Calu3 (cell line): ENCODE measurements at regions of chr17 and their contacts with region 1.

Region 1: DNA sequence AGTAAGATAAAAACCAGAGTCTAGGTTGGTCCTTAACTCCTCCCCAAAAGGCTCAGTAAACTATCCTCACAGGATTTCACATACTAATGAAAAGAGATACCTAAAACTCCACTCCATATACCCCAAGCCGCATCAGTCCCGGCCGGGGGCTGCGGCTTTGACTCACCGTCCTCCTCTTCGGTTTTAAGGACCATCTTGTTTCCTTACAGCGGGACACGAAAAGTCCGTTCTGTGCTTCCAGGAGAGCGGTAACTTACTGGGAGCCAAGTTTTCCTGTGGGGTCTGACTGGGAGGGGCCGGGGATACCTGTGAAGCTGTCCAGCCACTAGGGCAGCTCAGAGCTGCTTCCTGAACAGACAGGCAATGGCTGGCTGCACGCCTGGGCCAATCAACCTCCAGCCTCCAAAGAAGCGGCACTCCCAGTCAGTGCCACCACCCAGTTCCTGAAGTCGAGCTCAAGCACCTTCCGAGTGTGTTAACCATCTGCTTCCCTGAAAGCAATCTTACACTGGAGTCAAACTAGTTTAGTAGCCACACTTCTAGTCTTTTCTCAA is 45.5 kb downstream of the CYTH1 start:
- DNase-seq: peak; percentile 88
- H3K4me3 Mint-ChIP-seq: peak overlapping the region; percentile 96
- H3K27ac Mint-ChIP-seq: peak overlapping the region; percentile 88
- H3K4me1 Mint-ChIP-seq: peaks cover 38% of the 10 kb centered on the region
- H3K27me3 Mint-ChIP-seq: no peaks in the 10 kb centered on the region
- CTCF ChIP-seq: peak; percentile 31

Region 2: GRCh38 chr17:78278139-78279127 is 458.2 kb before region 1 on chr17:
- CTCF ChIA-PET with region 1: no interaction called
- intact Hi-C with region 1: no loop called
- DNase-seq: no peak
- H3K4me3 Mint-ChIP-seq: no peak overlapping the region
- H3K27ac Mint-ChIP-seq: no peak overlapping the region
- H3K4me1 Mint-ChIP-seq: no peaks in the 10 kb centered on the region
- H3K27me3 Mint-ChIP-seq: no peaks in the 10 kb centered on the region
- CTCF ChIP-seq: no peak

Region 3: DNA sequence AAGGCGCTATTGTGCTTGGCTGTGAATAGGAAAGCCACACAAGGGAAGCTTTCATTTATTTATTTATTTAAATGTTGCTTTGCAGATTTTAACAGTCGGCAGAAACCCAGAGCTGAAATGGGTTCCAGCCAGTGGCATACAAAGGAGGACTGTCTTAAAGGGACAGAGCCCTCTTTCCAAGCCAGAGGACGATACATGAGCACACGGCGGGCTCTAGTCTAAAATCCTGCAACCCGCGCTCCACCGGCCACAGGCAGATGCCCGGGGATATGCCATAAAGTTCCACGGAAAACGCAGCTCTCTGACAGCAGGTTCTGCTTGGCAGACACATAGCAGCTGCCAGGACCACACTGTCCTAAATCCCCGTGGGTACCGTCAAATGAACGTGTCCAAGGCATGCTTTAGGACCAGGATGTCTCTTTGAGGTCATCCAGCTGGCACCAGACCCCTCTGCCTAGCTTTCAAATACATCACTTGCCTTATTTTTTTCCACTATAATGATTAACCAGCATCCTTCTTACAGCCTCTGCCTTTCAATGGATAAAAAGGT is 19.1 kb before region 1 on chr17:
- CTCF ChIA-PET with region 1: interaction called, 12 read pairs
- intact Hi-C with region 1: no loop called
- DNase-seq: peak; percentile 16
- H3K4me3 Mint-ChIP-seq: peak overlapping the region; percentile 72
- H3K27ac Mint-ChIP-seq: peak overlapping the region; percentile 37
- H3K4me1 Mint-ChIP-seq: peaks cover 50% of the 10 kb centered on the region
- H3K27me3 Mint-ChIP-seq: no peaks in the 10 kb centered on the region
- CTCF ChIP-seq: no peak

Region 4: GRCh38 chr17:78852709-78853121 is 116.1 kb after region 1 on chr17:
- CTCF ChIA-PET with region 1: no interaction called
- intact Hi-C with region 1: no loop called
- DNase-seq: no peak
- H3K4me3 Mint-ChIP-seq: no peak overlapping the region
- H3K27ac Mint-ChIP-seq: no peak overlapping the region
- H3K4me1 Mint-ChIP-seq: no peaks in the 10 kb centered on the region
- H3K27me3 Mint-ChIP-seq: no peaks in the 10 kb centered on the region
- CTCF ChIP-seq: no peak